Psoas muscle (tissue), 8 donors: ENCODE measurements at regions of chr9 and their contacts with region 1.

Region 1: DNA sequence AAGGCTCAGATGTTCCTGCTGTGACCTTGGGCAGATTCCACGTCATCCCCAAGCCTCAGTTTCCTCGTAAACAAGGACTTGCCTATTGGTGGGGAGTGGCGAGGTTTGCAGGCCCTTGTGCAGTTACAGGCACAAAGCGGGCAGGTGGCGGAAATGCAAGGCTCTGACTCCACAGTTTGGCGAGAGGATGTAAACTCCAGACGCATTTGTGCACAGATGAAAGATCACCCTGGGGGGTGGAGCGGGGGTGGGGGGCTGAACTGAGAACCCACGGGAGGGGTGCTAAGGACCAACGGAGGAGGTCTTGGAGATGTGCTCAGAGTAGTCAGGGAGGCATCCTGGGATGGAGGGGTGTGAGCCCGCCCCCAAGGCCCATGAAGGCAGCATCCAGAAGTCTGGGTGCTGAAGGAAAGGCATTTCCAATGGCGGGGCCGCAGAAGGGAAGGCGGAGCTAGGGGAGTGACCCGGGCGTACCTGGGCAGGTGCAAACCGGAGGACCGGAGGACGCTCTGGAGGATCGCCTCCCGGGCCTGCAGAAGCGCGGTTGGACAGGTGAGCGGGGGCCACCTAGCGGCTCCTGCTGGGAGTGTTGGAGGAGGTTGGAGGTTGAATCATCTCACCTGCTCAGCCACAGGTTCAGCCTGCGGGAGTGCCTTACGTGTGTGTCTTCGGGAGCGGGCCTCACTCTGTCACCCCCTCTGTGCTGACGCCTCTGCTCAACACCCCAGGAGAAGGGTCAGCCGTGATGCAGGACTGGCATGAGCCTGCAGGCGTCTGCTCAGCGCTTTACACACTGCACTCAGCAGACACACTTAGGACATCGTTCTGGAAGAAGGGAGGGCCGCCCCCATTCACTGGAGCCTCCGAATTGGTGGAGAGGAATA is 1.9 kb upstream of the FIBCD1 start:
- DNase-seq: peak; percentile 59 to 78
- ATAC-seq: peak; percentile 72 to 90 (median 82)
- H3K4me3 ChIP-seq: no peak overlapping the region
- H3K27ac ChIP-seq: no peak overlapping the region
- H3K4me1 ChIP-seq: peaks cover 7% of the 10 kb centered on the region
- H3K27me3 ChIP-seq: peaks cover 0 to 82% (median 36%) of the 10 kb centered on the region in 3 donors
- CTCF ChIP-seq: peak; percentile 83

Region 2: GRCh38 chr9:129198319-129199011 is 1742.5 kb before region 1 on chr9:
- intact Hi-C with region 1: no loop called
- DNase-seq: peak; percentile 59 to 74
- ATAC-seq: no peak
- H3K4me3 ChIP-seq: no peak overlapping the region
- H3K27ac ChIP-seq: peak overlapping the region; percentile 39
- H3K4me1 ChIP-seq: no peaks in the 10 kb centered on the region
- H3K27me3 ChIP-seq: peaks cover 0 to 24% (median 4%) of the 10 kb centered on the region in 3 donors
- CTCF ChIP-seq: no peak

Region 3: GRCh38 chr9:130701056-130702022 is 239.6 kb before region 1 on chr9:
- intact Hi-C with region 1: loop called (anchors 2 to 5 kb)
- DNase-seq: peak; percentile 75 to 83
- ATAC-seq: peak; percentile 76 to 91 (median 85)
- H3K4me3 ChIP-seq: no peak overlapping the region
- H3K27ac ChIP-seq: no peak overlapping the region
- H3K4me1 ChIP-seq: no peaks in the 10 kb centered on the region
- H3K27me3 ChIP-seq: no peaks in the 10 kb centered on the region
- CTCF ChIP-seq: peak; percentile 87

Region 4: GRCh38 chr9:130707225-130707976 is 233.5 kb before region 1 on chr9:
- intact Hi-C with region 1: loop called (anchors 2 to 5 kb)
- DNase-seq: peak; percentile 54 to 61
- ATAC-seq: peak in 3 of 4 donors; percentile 18 to 38 (median 31)
- H3K4me3 ChIP-seq: no peak overlapping the region
- H3K27ac ChIP-seq: no peak overlapping the region
- H3K4me1 ChIP-seq: peaks cover 3% of the 10 kb centered on the region
- H3K27me3 ChIP-seq: no peaks in the 10 kb centered on the region
- CTCF ChIP-seq: peak; percentile 84

Region 5: DNA sequence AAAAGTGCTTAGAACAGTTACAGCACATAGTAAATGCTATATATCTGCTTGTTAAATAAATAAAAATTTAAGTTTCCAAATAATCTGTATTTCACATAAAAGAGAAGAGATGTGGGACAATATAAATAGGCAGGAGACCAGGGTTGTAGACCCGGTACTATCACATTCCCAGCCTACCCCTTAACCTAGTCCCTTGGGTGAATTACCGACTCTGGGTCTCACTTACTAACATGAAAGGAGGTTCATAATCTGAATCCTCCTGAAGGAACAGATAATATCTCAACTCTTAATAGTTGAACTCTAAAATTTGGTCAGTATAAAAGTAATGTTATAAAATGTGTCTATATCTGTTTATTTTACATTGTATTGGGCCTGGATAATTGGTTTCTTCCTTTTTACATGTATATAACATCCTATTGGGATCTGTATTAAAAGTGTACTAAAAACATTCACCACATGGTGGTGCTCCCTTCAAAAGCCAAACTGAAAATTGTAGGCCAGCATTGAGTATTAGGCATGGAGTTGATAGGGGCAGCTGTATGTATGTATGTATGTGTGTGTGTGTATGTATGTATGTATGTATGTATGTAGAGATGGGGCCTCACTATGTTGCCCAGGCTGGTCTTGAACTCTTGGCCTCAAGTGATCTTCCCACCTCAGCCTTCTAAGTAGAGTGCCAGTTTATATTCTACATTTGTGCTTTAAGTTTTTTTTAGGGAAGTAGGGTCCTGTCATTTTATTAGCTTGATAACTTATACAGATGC is 170.1 kb before region 1 on chr9:
- intact Hi-C with region 1: loop called in 1 of 2 experiments (anchors 10 kb)
- DNase-seq: no peak
- ATAC-seq: peak; percentile 43 to 73 (median 60)
- H3K4me3 ChIP-seq: no peak overlapping the region
- H3K27ac ChIP-seq: no peak overlapping the region
- H3K4me1 ChIP-seq: peaks cover 21% of the 10 kb centered on the region
- H3K27me3 ChIP-seq: no peaks in the 10 kb centered on the region
- CTCF ChIP-seq: peak; percentile 71

Region 6: GRCh38 chr9:130794923-130795495 is 145.9 kb before region 1 on chr9:
- intact Hi-C with region 1: no loop called
- DNase-seq: no peak
- ATAC-seq: no peak
- H3K4me3 ChIP-seq: no peak overlapping the region
- H3K27ac ChIP-seq: peak overlapping the region; percentile 31
- H3K4me1 ChIP-seq: peaks cover 12% of the 10 kb centered on the region
- H3K27me3 ChIP-seq: no peaks in the 10 kb centered on the region
- CTCF ChIP-seq: no peak

Region 7: GRCh38 chr9:130866474-130866965 is 74.4 kb before region 1 on chr9:
- intact Hi-C with region 1: loop called (anchors 2 to 5 kb)
- DNase-seq: peak; percentile 59 to 72
- ATAC-seq: peak; percentile 71 to 85 (median 78)
- H3K4me3 ChIP-seq: no peak overlapping the region
- H3K27ac ChIP-seq: no peak overlapping the region
- H3K4me1 ChIP-seq: peaks cover 29% of the 10 kb centered on the region
- H3K27me3 ChIP-seq: no peaks in the 10 kb centered on the region
- CTCF ChIP-seq: peak; percentile 67

Region 8: DNA sequence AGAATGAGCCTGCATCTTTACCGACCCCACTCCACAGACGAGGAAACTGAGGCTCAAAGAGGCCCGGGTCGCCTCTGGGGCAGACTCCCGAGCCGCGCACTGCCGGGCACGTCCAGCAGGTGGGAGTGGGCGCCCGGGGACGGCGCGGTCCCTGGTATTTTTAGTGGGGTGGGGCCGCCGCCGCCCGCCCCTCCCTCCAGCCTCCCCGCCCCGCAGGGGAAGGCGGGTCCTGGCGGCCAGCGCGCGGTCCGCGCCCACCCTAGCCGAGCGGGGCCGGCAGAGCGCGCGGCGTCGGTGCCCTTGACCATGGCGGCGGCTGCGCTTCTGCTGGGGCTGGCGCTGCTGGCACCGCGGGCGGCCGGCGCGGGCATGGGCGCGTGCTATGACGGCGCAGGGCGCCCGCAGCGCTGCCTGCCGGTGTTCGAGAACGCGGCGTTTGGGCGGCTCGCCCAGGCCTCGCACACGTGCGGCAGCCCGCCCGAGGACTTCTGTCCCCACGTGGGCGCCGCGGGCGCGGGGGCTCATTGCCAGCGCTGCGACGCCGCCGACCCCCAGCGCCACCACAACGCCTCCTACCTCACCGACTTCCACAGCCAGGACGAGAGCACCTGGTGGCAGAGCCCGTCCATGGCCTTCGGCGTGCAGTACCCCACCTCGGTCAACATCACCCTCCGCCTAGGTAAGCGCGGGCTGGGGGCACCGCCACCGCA is 68.1 kb after region 1 on chr9 and contains the start of gene LAMC3:
- intact Hi-C with region 1: no loop called
- DNase-seq: peak in 1 of 2 donors; percentile 24
- ATAC-seq: peak in 1 of 4 donors; percentile 26
- H3K4me3 ChIP-seq: peak within 1 kb of the TSS; percentile 22
- H3K27ac ChIP-seq: no peak within 1 kb of the TSS
- H3K4me1 ChIP-seq: no peaks in the 10 kb centered on the region
- H3K27me3 ChIP-seq: peaks cover 0 to 65% (median 12%) of the 10 kb centered on the region in 3 donors
- CTCF ChIP-seq: no peak
- total RNA-seq, gene LAMC3: 0.21 to 0.66 (median 0.24) TPM in 3 of 4 donors, not detected in the other